ENCODE measurements at regions of chr15 and their contacts with region 1.

Region 1: GRCh38 chr15:62940755-62941361 is 101.7 kb upstream of the TPM1 start:
- DNase-seq: peak; percentile 85 to 92 (median 89)
- ATAC-seq: peak; percentile 89 to 91
- H3K4me3 ChIP-seq: no peak overlapping the region
- H3K27ac ChIP-seq: peak overlapping the region; percentile 65
- H3K4me1 ChIP-seq: peaks cover 11% of the 10 kb centered on the region
- H3K27me3 ChIP-seq: no peaks in the 10 kb centered on the region

Region 2: DNA sequence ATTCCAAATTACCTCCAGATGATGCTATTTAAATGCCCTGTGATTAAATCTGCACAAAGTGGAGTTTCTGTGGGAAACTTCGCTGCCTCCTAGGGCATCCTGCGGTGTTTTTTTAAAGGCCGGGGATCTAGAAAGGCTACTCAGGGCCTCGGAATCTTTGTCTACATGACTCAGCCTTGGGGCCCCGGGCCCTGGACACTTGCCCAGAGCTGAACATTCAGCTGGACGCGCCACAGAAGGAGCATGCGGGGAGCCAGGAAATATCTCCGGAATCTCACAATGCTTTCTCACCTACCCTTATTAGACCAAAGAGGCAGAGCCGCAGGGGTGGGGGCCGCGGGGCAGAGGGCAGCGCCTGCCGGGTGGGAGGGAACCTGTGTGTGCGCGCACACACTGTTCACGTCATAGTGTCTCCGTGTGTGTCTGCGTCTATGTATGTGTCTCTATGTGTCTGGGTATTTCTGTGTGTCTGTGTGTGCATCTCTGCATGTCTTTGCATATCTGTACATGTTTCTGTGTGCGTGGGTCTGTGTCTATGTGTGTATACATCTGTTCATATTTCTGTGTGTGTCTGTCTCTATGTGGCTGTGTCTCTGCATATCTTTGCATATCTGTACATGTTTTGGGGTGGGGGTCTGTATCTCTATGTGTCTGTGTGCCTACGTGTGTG is 43.7 kb before region 1 on chr15:
- intact Hi-C with region 1: no loop called
- DNase-seq: peak; percentile 90 to 95 (median 95)
- ATAC-seq: peak; percentile 88 to 94
- H3K4me3 ChIP-seq: peak overlapping the region; percentile 7
- H3K27ac ChIP-seq: peak overlapping the region; percentile 86
- H3K4me1 ChIP-seq: peaks cover 7% of the 10 kb centered on the region
- H3K27me3 ChIP-seq: no peaks in the 10 kb centered on the region

Region 3: GRCh38 chr15:63030101-63030551 is 89.3 kb after region 1 on chr15:
- intact Hi-C with region 1: loop called in 1 of 4 experiments (anchors 10 kb)
- DNase-seq: peak; percentile 34 to 68 (median 63)
- ATAC-seq: peak; percentile 63 to 75
- H3K4me3 ChIP-seq: no peak overlapping the region
- H3K27ac ChIP-seq: no peak overlapping the region
- H3K4me1 ChIP-seq: no peaks in the 10 kb centered on the region
- H3K27me3 ChIP-seq: no peaks in the 10 kb centered on the region

Region 4: DNA sequence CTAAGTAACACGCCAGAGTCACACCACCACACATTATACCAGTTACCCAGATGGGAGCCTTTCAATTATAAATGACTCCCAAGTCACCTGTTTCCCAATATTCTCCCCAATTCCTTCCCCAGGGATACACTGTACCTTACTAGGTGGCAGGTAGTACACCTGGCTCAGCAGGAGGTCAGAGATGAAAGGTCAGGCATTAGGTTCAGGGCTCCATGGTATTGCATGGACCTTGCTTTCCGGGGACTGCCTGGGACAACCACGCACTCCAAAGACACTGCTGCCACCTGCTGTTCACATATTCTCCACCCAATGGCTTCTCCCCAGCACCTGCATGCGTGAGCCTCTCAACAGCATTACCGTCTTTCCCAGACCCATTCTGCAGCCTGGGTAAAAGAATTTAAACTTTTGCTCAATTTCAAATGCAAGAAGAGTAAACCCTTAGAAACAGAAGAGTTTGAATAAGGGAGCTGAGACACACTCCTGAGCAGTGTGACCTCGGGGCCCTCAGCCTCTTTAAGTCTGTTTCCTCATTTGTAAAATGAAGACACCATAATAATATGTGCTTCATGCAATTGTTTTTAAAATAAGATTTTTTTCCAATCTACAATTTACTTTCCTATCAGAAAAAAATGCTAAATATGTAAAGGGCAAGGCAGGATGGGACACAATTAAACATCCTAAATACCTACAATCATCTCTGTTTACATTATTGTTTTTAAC is 152.8 kb after region 1 on chr15:
- intact Hi-C with region 1: no loop called
- DNase-seq: peak; percentile 79 to 89 (median 86)
- ATAC-seq: peak; percentile 91 to 92
- H3K4me3 ChIP-seq: no peak overlapping the region
- H3K27ac ChIP-seq: no peak overlapping the region
- H3K4me1 ChIP-seq: peaks cover 7% of the 10 kb centered on the region
- H3K27me3 ChIP-seq: no peaks in the 10 kb centered on the region

Region 5: DNA sequence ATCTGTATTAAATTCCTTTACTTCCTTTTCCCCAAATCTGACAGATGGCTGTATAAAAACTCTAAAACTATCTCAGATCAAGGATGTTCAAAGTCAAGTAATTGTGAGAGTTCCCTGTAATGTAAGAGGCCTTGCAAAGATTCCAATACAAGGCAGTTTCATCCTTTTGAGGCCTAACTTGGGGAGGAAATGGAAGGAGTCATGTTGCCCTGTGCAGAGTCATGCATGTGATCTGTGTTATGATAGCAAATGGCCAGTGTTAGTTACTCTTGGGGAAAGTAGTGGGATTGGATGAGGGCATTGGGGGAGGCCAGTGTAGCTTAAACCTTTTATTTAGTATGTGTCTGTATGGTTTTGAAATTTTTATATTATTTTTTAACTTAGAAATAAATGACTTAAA is 632.7 kb after region 1 on chr15:
- intact Hi-C with region 1: no loop called
- DNase-seq: no peak
- ATAC-seq: no peak
- H3K4me3 ChIP-seq: no peak overlapping the region
- H3K27ac ChIP-seq: no peak overlapping the region
- H3K4me1 ChIP-seq: no peaks in the 10 kb centered on the region
- H3K27me3 ChIP-seq: no peaks in the 10 kb centered on the region

Measured in right cardiac atrium (tissue), 5 donors.